ENCODE measurements at regions of chr5 and their contacts with region 1.

Region 1: GRCh38 chr5:116557669-116558271 is 16.9 kb downstream of the SEMA6A start:
- DNase-seq: peak; percentile 52
- H3K4me3 Mint-ChIP-seq: no peak overlapping the region
- H3K27ac Mint-ChIP-seq: no peak overlapping the region
- H3K4me1 Mint-ChIP-seq: no peaks in the 10 kb centered on the region
- H3K27me3 Mint-ChIP-seq: no peaks in the 10 kb centered on the region
- CTCF ChIP-seq: peak; percentile 72

Region 2: DNA sequence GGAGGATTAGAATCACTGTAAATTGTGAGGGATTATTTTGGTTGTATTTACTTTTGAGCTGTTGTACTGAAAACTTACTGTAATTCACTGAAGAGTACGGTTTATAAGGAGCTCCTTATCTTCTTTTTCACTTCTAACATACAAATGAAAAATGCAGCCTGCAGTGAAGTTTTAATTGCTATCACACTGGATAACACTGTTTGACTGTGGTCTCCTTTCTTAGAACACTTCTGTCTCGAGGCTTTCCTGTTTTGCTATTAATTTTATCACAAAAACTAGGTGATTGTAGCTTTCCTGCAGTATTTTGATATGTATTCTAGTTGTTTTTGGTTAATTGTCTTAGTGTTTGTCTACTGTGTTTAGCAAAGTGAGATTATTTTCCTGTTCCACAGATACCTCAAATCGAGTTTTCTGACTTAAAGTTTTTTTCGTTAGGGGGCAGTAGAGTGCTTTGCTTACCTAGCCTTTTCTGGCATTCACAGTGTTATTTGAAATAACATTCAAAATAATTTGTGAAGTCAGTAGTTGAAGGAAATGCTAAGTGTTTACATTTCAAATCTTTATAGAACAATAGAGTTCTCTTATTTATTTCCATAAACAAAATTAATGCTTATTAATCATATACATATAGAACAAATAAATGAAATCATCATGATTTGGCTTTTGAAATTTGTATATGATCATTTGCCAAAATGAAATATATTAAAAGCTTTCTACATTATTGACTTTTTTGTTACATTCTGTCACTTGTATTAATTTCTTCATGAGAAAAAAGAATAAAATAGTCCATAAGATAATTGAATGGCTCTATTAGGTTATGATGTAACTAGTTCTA is 420.0 kb before region 1 on chr5:
- CTCF ChIA-PET with region 1: interaction called, 5 read pairs
- POLR2A ChIA-PET with region 1: no interaction called
- intact Hi-C with region 1: loop called (anchors 1 kb)
- DNase-seq: peak; percentile 57
- H3K4me3 Mint-ChIP-seq: no peak overlapping the region
- H3K27ac Mint-ChIP-seq: no peak overlapping the region
- H3K4me1 Mint-ChIP-seq: no peaks in the 10 kb centered on the region
- H3K27me3 Mint-ChIP-seq: no peaks in the 10 kb centered on the region
- CTCF ChIP-seq: peak; percentile 68

Region 3: DNA sequence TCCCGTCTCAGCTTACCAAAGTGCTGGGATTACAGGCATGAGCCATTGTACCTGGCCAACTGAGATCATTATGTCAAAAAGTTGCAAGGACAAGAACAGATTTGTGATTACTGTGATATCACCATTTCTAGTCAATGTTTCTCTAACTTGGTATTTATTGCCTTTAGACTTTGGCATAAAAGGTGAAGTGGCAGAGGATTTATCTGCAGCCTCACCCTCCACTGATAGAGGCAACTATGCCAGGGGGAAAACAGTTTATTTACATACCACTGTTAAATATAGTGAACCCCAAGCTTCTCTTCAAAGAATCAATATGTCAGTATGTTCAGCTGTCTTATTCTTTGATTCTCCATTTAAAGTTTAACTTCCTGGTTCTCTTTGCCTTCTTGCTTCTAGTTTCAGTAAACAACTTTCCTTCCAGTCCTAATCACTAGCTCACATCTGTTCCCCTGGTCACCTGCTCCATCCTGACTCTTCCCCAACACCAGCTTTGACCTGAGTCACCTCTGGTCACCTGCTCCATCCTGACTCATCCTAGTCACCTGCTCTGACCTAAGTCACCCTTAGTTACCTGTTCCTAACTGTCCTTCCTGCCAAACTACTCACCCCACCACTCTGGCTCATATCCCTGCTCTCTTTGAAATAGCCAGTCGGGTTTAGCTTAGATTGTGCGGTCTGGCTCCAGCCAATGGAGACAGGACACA is 13.1 kb before region 1 on chr5:
- CTCF ChIA-PET with region 1: interaction called, 13 read pairs
- POLR2A ChIA-PET with region 1: no interaction called
- intact Hi-C with region 1: no loop called
- DNase-seq: no peak
- H3K4me3 Mint-ChIP-seq: no peak overlapping the region
- H3K27ac Mint-ChIP-seq: no peak overlapping the region
- H3K4me1 Mint-ChIP-seq: peaks cover 11% of the 10 kb centered on the region
- H3K27me3 Mint-ChIP-seq: no peaks in the 10 kb centered on the region
- CTCF ChIP-seq: no peak

Region 4: GRCh38 chr5:116574367-116575325 is 16.9 kb after region 1 on chr5 and contains the start of gene SEMA6A:
- CTCF ChIA-PET with region 1: interaction called, 13 read pairs
- POLR2A ChIA-PET with region 1: interaction called, 5 read pairs
- intact Hi-C with region 1: no loop called
- DNase-seq: peak; percentile 94
- H3K4me3 Mint-ChIP-seq: peak within 1 kb of the TSS; percentile 93
- H3K27ac Mint-ChIP-seq: peak within 1 kb of the TSS; percentile 37
- H3K4me1 Mint-ChIP-seq: peaks cover 5% of the 10 kb centered on the region
- H3K27me3 Mint-ChIP-seq: no peaks in the 10 kb centered on the region
- CTCF ChIP-seq: peak; percentile 12
- total RNA-seq, gene SEMA6A: 1.5 and 2.1 TPM in 2 replicates

Region 5: GRCh38 chr5:116947691-116948528 is 390.1 kb after region 1 on chr5:
- CTCF ChIA-PET with region 1: interaction called, 6 read pairs
- POLR2A ChIA-PET with region 1: interaction called, 3 read pairs
- intact Hi-C with region 1: loop called (anchors 1 kb)
- DNase-seq: peak; percentile 84
- H3K4me3 Mint-ChIP-seq: no peak overlapping the region
- H3K27ac Mint-ChIP-seq: no peak overlapping the region
- H3K4me1 Mint-ChIP-seq: peaks cover 9% of the 10 kb centered on the region
- H3K27me3 Mint-ChIP-seq: no peaks in the 10 kb centered on the region
- CTCF ChIP-seq: peak; percentile 54

Region 6: GRCh38 chr5:117494188-117494587 is 936.4 kb after region 1 on chr5:
- CTCF ChIA-PET with region 1: interaction called, 4 read pairs
- POLR2A ChIA-PET with region 1: no interaction called
- intact Hi-C with region 1: loop called (anchors 10 kb)
- DNase-seq: no peak
- H3K4me3 Mint-ChIP-seq: no peak overlapping the region
- H3K27ac Mint-ChIP-seq: no peak overlapping the region
- H3K4me1 Mint-ChIP-seq: no peaks in the 10 kb centered on the region
- H3K27me3 Mint-ChIP-seq: no peaks in the 10 kb centered on the region
- CTCF ChIP-seq: no peak

Measured in MCF 10A (cell line).